ENCODE measurements at regions of chr1 and their contacts with region 1.

Region 1: DNA sequence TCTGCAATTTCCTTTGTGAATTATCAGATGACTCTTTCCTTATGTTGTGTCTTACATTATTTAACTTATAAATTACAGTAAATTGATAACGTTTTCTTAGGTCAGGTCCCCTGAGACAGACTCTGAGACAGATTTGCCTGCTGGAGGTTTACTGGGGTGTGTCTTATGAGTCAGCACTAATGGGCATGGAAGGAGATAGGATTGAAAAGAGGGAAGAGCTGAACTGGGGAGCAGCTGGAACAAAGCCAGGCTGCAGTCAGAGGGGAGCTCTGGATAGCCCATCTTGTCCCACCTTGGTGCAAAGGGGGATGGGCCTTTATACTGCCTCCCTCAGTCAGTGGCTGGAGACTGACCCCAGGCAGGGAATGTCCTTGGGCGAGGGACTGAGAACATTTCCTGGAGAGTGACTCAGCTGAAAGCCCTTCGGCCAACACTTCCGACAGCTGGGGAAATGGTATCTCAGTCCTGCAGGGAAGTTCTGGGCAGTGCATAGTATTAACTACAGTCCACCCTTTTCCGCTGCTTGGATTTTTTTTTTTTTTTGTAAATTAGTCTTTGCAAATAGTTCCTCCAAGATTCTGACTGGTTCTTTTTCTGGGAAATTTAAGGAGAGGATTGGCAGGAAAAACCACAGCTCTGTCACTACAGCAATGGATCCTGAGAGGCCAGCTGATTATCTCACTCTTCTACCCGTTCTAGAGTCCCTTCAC is 39.0 kb upstream of the CDC42BPA start:
- DNase-seq: peak; percentile 72 to 90 (median 78)
- ATAC-seq: peak; percentile 93 to 99 (median 98)
- H3K4me3 ChIP-seq: no peak overlapping the region
- H3K27ac ChIP-seq: peak overlapping the region; percentile 49 to 85 (median 75)
- H3K4me1 ChIP-seq: peaks cover 0 to 28% (median 19%) of the 10 kb centered on the region in 12 donors
- H3K27me3 ChIP-seq: no peaks in the 10 kb centered on the region
- CTCF ChIP-seq: peak in 1 of 12 donors; percentile 7
- POLR2A ChIP-seq: no peak

Region 2: GRCh38 chr1:227388214-227389173 is 31.2 kb after region 1 on chr1:
- intact Hi-C with region 1: loop called in 1 of 10 experiments (anchors 2 kb)
- DNase-seq: no peak
- ATAC-seq: no peak
- H3K4me3 ChIP-seq: no peak overlapping the region
- H3K27ac ChIP-seq: no peak overlapping the region
- H3K4me1 ChIP-seq: peaks cover 0 to 5% (median 0%) of the 10 kb centered on the region in 12 donors
- H3K27me3 ChIP-seq: no peaks in the 10 kb centered on the region
- CTCF ChIP-seq: no peak
- POLR2A ChIP-seq: no peak

Region 3: GRCh38 chr1:227416156-227416830 is 59.0 kb after region 1 on chr1:
- intact Hi-C with region 1: loop called in 2 of 10 experiments (anchors 5 to 10 kb)
- DNase-seq: no peak
- ATAC-seq: no peak
- H3K4me3 ChIP-seq: no peak overlapping the region
- H3K27ac ChIP-seq: no peak overlapping the region
- H3K4me1 ChIP-seq: peaks cover 0 to 21% (median 2%) of the 10 kb centered on the region in 12 donors
- H3K27me3 ChIP-seq: no peaks in the 10 kb centered on the region
- CTCF ChIP-seq: no peak
- POLR2A ChIP-seq: no peak

Region 4: DNA sequence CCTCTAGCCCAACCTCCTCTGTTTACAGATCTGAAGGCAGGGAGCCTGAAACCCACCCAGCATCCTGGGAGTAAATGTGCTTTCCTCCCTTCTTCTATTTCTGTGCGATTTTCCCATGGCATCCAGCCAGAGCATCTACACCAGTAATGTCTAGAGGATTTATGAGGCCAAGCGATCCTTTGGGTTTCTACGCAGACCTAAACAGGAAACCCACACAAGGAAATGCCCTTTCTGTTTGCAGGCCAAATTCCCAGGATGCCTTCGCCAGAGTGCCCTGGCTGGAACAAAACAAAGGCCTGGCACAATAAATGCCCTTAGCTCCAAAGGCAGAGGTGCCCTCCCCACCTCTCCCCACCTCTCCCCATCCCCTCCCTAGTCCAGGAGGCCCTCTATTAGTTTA is 71.5 kb after region 1 on chr1:
- intact Hi-C with region 1: loop called in 4 of 10 experiments (anchors 1 to 10 kb)
- DNase-seq: peak; percentile 38 to 70 (median 56)
- ATAC-seq: peak; percentile 40 to 60 (median 48)
- H3K4me3 ChIP-seq: no peak overlapping the region
- H3K27ac ChIP-seq: peak overlapping the region in 11 of 12 donors; percentile 27 to 76 (median 62)
- H3K4me1 ChIP-seq: peaks cover 0 to 52% (median 28%) of the 10 kb centered on the region in 12 donors
- H3K27me3 ChIP-seq: no peaks in the 10 kb centered on the region
- CTCF ChIP-seq: no peak
- POLR2A ChIP-seq: no peak